Vagina (tissue), 2 donors: ENCODE measurements at regions of chr1 and their contacts with region 1.

Region 1: DNA sequence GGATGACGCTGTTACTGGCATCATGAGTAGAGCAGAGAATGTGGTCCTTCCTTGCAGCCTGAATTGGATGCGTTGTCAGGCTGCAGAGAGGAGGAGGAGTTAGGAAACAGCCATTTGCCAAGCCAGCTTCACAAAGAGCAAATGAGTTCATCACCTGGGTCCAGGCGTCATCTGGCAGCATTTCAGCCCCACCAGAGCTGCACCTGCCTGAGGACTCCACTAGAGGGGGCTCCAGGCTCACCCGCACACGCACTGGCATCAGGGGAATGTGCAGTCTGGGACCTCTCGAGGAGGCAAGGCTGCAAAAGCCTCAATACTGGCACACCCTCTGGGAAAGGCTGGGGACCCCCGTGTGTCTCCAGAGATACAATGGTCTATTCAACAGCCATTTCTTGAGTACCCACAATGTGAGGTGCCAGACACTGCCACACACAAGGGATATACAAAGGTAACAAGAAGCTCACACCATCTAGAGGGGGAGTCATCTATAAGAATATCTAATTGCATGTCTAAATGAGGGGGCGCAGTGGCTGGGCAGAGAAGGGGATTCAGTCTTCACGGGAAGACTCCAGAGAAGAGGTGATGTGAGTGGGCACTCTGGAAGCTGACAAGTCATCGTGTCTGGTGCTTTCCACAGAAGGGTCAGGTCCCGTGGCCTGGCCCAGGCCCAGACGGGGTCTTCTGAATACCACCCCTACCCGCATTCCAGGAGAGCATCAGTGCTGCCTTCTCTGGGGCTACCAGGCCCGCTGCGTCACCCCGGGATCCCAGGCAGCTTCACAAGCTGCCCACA is 53.5 kb upstream of the CNTN2 start:
- DNase-seq: no peak
- H3K4me3 ChIP-seq: no peak overlapping the region
- H3K27ac ChIP-seq: no peak overlapping the region
- H3K4me1 ChIP-seq: no peaks in the 10 kb centered on the region
- H3K27me3 ChIP-seq: no peaks in the 10 kb centered on the region
- CTCF ChIP-seq: peak; percentile 64 to 78 (median 70)
- POLR2A ChIP-seq: no peak

Region 2: GRCh38 chr1:204937901-204938300 is 51.6 kb before region 1 on chr1:
- intact Hi-C with region 1: no loop called
- DNase-seq: no peak
- H3K4me3 ChIP-seq: no peak overlapping the region
- H3K27ac ChIP-seq: no peak overlapping the region
- H3K4me1 ChIP-seq: no peaks in the 10 kb centered on the region
- H3K27me3 ChIP-seq: no peaks in the 10 kb centered on the region
- CTCF ChIP-seq: no peak
- POLR2A ChIP-seq: no peak

Region 3: DNA sequence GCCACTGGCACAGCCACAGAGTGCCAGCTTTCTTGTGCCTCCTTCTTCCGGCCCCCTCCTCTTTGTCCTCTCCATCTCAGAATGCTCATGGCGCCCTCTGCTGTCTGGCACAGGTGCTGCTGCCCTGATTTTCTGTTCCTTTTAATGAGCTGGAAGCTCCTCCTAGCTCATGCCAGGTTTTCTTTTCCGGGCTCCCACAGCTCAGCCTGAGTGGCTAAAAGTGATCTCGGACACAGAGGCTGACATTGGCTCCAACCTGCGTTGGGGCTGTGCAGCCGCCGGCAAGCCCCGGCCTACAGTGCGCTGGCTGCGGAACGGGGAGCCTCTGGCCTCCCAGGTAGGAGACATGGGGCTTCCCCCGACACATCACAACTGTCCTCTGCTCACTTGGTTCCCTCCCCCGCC is 72.2 kb after region 1 on chr1:
- intact Hi-C with region 1: loop called (anchors 5 kb)
- DNase-seq: no peak
- H3K4me3 ChIP-seq: no peak overlapping the region
- H3K27ac ChIP-seq: no peak overlapping the region
- H3K4me1 ChIP-seq: peaks cover 8% of the 10 kb centered on the region
- H3K27me3 ChIP-seq: no peaks in the 10 kb centered on the region
- CTCF ChIP-seq: peak; percentile 39 to 88 (median 69)
- POLR2A ChIP-seq: no peak